Esophagus squamous epithelium (tissue), 5 donors: ENCODE measurements at regions of chrX and their contacts with region 1.

Region 1: GRCh38 chrX:54891573-54891972 is 29.1 kb upstream of the TRO start:
- DNase-seq: no peak
- H3K4me3 ChIP-seq: no peak overlapping the region
- H3K27ac ChIP-seq: no peak overlapping the region
- H3K4me1 ChIP-seq: no peaks in the 10 kb centered on the region
- H3K27me3 ChIP-seq: no peaks in the 10 kb centered on the region
- CTCF ChIP-seq: peak in 3 of 6 experiments; percentile 31 to 47 (median 37)
- POLR2A ChIP-seq: no peak

Region 2: GRCh38 chrX:55057675-55058249 is 166.2 kb after region 1 on chrX:
- intact Hi-C with region 1: loop called (anchors 10 kb)
- DNase-seq: no peak
- H3K4me3 ChIP-seq: peak overlapping the region in 2 of 4 donors; percentile 6 to 14
- H3K27ac ChIP-seq: no peak overlapping the region
- H3K4me1 ChIP-seq: no peaks in the 10 kb centered on the region
- H3K27me3 ChIP-seq: no peaks in the 10 kb centered on the region
- CTCF ChIP-seq: peak; percentile 43 to 76 (median 62)
- POLR2A ChIP-seq: no peak